IMR-90 (cell line): ENCODE measurements at regions of chr18 and their contacts with region 1.

Region 1: GRCh38 chr18:21897811-21898210 is 157.2 kb downstream of the MIB1 start:
- DNase-seq: peak; percentile 42
- ATAC-seq: peak; percentile 87
- H3K4me3 ChIP-seq: no peak overlapping the region
- H3K27ac ChIP-seq: no peak overlapping the region
- H3K4me1 ChIP-seq: no peaks in the 10 kb centered on the region; the same call in 1 of the 2 replicates
- H3K27me3 ChIP-seq: no peaks in the 10 kb centered on the region; the same call in 1 of the 2 replicates
- CTCF ChIP-seq: peak; percentile 66
- POLR2A ChIP-seq: no peak
- RAD21 ChIP-seq: peak; percentile 71

Region 2: DNA sequence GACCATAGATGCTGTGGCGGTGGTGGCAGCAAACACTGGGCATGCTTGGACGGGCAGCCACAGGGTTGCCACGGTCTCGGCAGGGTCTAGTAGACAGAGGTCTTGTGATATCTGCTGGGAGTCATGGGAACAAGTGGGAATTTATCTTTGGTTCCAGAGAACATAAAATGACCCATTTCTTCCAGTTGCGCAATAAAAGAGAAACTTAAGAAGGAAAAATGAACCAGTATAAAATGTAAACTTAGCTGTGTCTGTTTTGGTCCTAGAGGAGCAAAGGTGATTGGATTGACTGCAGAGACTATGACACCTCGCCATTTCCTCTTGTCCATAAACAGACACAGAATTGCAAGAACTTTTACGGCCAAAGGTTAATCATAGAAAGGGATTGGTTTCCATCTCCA is 902.7 kb after region 1 on chr18:
- CTCF ChIA-PET with region 1: no interaction called
- POLR2A ChIA-PET with region 1: no interaction called
- dilution Hi-C with region 1: no loop called
- in situ Hi-C with region 1: no loop called
- intact Hi-C with region 1: loop called (anchors 5 kb)
- DNase-seq: peak; percentile 28
- ATAC-seq: no peak
- H3K4me3 ChIP-seq: no peak overlapping the region
- H3K27ac ChIP-seq: no peak overlapping the region
- H3K4me1 ChIP-seq: 0 out of 2 replicates have a peak, but pooled peaks cover 2% of the 10 kb centered on the region
- H3K27me3 ChIP-seq: no peaks in the 10 kb centered on the region
- CTCF ChIP-seq: no peak
- POLR2A ChIP-seq: no peak
- RAD21 ChIP-seq: no peak